ENCODE measurements at regions of chr4 and their contacts with region 1.

Region 1: DNA sequence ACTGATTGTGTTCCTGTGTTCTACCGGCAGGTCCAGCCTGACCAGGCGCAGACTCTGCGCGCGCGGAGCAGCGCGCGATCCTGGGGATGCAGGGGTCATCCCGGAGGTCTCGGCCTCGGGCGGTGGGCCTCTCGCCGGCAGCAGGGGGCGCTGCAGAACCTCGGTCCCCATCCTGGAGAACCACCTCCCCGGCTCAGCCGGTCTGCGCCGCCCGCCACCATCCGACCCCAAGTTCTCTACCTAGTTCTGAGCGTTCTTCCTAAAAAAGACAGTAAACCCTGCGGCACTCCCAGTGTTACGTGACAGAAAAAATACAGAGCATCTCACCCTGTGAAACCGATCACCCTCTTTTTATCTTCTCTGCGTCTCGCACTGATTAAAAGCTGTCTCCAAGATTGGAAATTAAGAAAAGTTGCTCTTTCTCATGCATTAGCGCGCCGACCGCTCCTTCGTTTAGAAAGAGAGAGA is 1.6 kb downstream of the TRPC3 start:
- DNase-seq: peak in 1 of 2 experiments; percentile 73
- H3K4me3 ChIP-seq: peak overlapping the region; percentile 12; the same call in 1 of the 2 replicates
- H3K27ac ChIP-seq: no peak overlapping the region
- H3K4me1 ChIP-seq: no peaks in the 10 kb centered on the region
- H3K27me3 ChIP-seq: peaks cover 20% of the 10 kb centered on the region; the same call in 1 of the 2 replicates
- CTCF ChIP-seq: peak; percentile 53; the same call in 1 of the 2 replicates

Region 2: DNA sequence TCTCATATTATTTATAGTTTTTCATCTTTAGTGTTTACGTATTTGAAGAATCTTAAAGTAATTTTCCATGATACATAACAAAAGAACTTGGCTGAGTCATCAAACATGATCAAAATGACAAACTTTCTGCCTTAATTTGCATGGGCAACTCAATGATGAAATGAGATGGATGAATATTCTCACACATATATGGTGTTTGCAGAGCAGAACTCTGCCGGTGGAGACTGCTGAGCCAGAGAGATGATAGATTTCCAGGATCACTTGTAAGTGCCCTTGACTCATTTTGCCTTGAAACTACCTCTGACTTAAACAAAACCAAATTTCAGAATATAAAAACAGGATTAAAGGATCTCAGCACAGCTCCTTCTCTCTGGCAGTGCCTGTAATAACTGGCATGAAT is 36.6 kb before region 1 on chr4:
- CTCF ChIA-PET with region 1: no interaction called
- POLR2A ChIA-PET with region 1: no interaction called
- intact Hi-C with region 1: no loop called
- DNase-seq: no peak
- H3K4me3 ChIP-seq: no peak overlapping the region
- H3K27ac ChIP-seq: no peak overlapping the region
- H3K4me1 ChIP-seq: no peaks in the 10 kb centered on the region
- H3K27me3 ChIP-seq: no peaks in the 10 kb centered on the region
- CTCF ChIP-seq: no peak

Region 3: DNA sequence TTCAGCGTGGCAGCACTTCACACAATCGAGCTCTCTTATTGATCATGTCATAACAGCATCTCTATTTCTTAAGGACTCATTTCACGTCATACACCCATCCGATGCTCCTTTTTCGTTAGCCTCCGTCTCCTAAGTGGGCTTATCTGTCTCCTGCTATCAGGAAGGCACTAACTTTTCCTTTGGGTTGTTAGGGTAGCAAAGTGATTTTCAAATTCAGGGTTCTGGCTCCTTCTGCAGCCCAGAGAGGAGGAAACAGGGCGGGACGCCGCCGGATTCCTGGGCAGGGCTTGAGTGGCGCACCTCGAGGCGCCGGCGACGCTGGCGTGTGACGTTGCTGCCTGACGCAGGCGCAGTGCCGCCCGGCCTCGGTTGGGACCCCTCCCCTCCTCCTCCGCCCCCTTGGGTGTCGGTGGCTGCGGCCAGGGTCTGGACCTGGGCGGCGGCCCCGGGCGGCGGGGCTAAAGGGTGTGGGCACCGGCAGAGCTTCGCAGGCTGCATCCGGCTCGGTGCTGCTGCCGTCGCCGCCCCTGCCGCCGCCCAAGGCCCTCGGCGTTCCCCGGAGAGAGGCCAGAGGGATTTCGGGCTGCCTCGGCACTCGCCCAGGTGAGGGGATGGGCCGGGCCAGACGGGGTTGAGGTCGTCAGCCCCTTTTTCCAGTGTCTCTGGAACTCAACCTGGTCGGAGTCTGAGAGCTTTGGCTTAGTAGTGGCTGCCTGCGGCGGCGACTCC is 201.9 kb after region 1 on chr4 and contains the start of gene BLTP1:
- CTCF ChIA-PET with region 1: no interaction called
- POLR2A ChIA-PET with region 1: no interaction called
- intact Hi-C with region 1: loop called (anchors 2 kb)
- DNase-seq: peak; percentile 73 to 89
- H3K4me3 ChIP-seq: peak within 1 kb of the TSS; percentile 81
- H3K27ac ChIP-seq: peak within 1 kb of the TSS; percentile 57
- H3K4me1 ChIP-seq: peaks cover 17% of the 10 kb centered on the region
- H3K27me3 ChIP-seq: no peaks in the 10 kb centered on the region
- CTCF ChIP-seq: no peak
- total RNA-seq, gene BLTP1: 44.0 and 48.4 TPM in 2 replicates